Natural killer cell (primary cell): ENCODE measurements at regions of chr5 and their contacts with region 1.

Region 1: DNA sequence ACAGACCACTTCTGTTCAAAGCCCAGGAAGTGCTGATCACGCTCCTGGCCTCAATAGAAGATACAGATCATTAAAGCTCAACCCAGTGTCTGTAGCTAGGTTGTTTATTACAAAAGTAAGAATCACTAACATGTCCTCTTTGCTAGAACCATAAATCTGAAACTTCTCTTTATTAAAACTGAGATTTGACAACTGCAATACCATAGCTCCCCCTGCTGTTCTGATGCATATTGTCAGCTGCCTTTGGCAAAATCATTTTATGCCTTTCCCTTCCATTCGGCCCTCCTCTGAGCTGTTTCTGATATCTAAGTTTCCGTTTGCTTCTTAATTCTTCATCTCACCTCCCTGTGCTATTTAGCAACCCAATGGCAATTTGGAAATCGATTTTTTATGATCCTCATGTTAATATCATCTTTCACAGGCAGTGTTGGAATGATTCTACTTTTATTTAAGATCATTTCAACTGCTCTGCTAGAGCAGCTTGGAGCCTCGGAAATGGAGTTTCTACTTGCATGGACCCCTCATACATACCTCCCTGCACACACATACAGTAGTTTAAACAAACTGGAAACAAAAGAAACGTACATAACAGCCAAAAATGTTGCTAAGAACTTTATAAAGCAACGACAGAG is 998.8 kb downstream of the MAT2B start:
- DNase-seq: peak in 1 of 2 donors; percentile 35
- ATAC-seq: peak in 2 of 3 donors; percentile 36 to 53
- H3K4me3 ChIP-seq: no peak overlapping the region
- H3K4me3 Mint-ChIP-seq: no peak overlapping the region
- H3K27ac ChIP-seq: no peak overlapping the region
- H3K27ac Mint-ChIP-seq: no peak overlapping the region
- H3K4me1 ChIP-seq: no peaks in the 10 kb centered on the region
- H3K4me1 Mint-ChIP-seq: peaks cover 0 to 7% of the 10 kb centered on the region in 2 donors
- H3K27me3 ChIP-seq: no peaks in the 10 kb centered on the region
- H3K27me3 Mint-ChIP-seq: no peaks in the 10 kb centered on the region
- CTCF ChIP-seq: peak; percentile 70

Region 2: DNA sequence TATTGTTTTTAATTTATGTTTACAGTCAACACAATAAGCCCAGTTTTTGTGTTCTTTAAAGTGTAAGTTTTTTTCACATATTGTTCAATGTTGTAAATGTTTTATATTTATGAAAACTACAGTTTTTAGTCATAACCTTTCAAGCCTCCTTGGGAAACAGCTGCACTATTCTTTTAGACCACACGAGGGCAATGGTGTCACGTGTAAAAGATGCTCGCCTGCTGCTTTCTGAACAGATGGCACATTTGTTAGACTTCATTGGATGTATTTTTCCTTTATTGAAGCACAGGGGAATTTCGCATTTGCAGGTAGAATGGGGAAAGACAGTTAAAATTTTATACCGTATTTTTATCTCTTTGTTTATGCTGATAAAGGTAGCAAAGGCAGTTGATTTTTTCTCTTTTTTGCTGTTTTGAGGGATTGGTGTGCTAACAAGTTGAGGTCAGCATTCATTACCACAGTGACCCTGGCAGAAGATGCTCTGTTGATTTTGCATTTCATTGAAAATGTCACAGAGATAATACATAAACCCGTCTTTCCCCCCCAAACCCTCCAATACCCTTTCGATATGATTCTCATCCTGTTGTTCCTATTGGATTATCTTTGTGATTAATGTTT is 939.8 kb before region 1 on chr5:
- intact Hi-C with region 1: loop called (anchors 1 kb)
- DNase-seq: peak; percentile 33 to 80
- ATAC-seq: peak; percentile 54 to 70 (median 67)
- H3K4me3 ChIP-seq: no peak overlapping the region
- H3K4me3 Mint-ChIP-seq: peak overlapping the region; percentile 14
- H3K27ac ChIP-seq: no peak overlapping the region
- H3K27ac Mint-ChIP-seq: no peak overlapping the region
- H3K4me1 ChIP-seq: peaks cover 15% of the 10 kb centered on the region
- H3K4me1 Mint-ChIP-seq: peaks cover 18% of the 10 kb centered on the region in 2 donors
- H3K27me3 ChIP-seq: peaks cover 12% of the 10 kb centered on the region
- H3K27me3 Mint-ChIP-seq: peaks cover 48 to 75% of the 10 kb centered on the region in 2 donors
- CTCF ChIP-seq: peak; percentile 97

Region 3: GRCh38 chr5:163695830-163696578 is 808.3 kb before region 1 on chr5:
- intact Hi-C with region 1: loop called (anchors 1 kb)
- DNase-seq: peak in 1 of 2 donors; percentile 24
- ATAC-seq: peak; percentile 74 to 95 (median 89)
- H3K4me3 ChIP-seq: no peak overlapping the region
- H3K4me3 Mint-ChIP-seq: no peak overlapping the region
- H3K27ac ChIP-seq: no peak overlapping the region
- H3K27ac Mint-ChIP-seq: no peak overlapping the region
- H3K4me1 ChIP-seq: no peaks in the 10 kb centered on the region
- H3K4me1 Mint-ChIP-seq: peaks cover 5 to 7% of the 10 kb centered on the region in 2 donors
- H3K27me3 ChIP-seq: no peaks in the 10 kb centered on the region
- H3K27me3 Mint-ChIP-seq: no peaks in the 10 kb centered on the region
- CTCF ChIP-seq: peak; percentile 79

Region 4: GRCh38 chr5:164013077-164013670 is 491.1 kb before region 1 on chr5:
- intact Hi-C with region 1: loop called (anchors 1 kb)
- DNase-seq: peak; percentile 25 to 33
- ATAC-seq: peak in 2 of 3 donors; percentile 55 to 60
- H3K4me3 ChIP-seq: no peak overlapping the region
- H3K4me3 Mint-ChIP-seq: no peak overlapping the region
- H3K27ac ChIP-seq: no peak overlapping the region
- H3K27ac Mint-ChIP-seq: no peak overlapping the region
- H3K4me1 ChIP-seq: no peaks in the 10 kb centered on the region
- H3K4me1 Mint-ChIP-seq: no peaks in the 10 kb centered on the region
- H3K27me3 ChIP-seq: no peaks in the 10 kb centered on the region
- H3K27me3 Mint-ChIP-seq: no peaks in the 10 kb centered on the region
- CTCF ChIP-seq: peak; percentile 74

Region 5: DNA sequence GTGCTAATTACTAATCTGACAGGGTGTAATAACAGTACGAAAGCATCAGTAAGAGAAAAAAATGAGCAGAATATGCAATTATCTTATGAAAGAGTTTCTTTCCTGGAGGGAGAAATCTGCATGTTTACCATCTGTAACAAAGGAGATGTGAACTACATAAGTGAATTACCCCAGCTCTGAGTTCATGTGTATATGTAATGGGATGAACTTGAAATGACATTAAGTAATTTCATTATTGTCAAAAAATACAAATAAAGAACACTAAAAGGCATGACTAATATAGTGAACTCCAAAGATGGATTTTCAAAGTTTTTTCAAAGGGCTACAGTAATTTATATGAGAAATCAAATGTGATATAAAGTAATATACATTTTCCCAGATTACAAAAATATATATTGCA is 54.8 kb before region 1 on chr5:
- intact Hi-C with region 1: no loop called
- DNase-seq: no peak
- ATAC-seq: no peak
- H3K4me3 ChIP-seq: no peak overlapping the region
- H3K4me3 Mint-ChIP-seq: no peak overlapping the region
- H3K27ac ChIP-seq: no peak overlapping the region
- H3K27ac Mint-ChIP-seq: no peak overlapping the region
- H3K4me1 ChIP-seq: no peaks in the 10 kb centered on the region
- H3K4me1 Mint-ChIP-seq: no peaks in the 10 kb centered on the region
- H3K27me3 ChIP-seq: no peaks in the 10 kb centered on the region
- H3K27me3 Mint-ChIP-seq: no peaks in the 10 kb centered on the region
- CTCF ChIP-seq: no peak